ENCODE measurements at regions of chr22 and their contacts with region 1.

Region 1: GRCh38 chr22:47213571-47214230 is 451.3 kb downstream of the TBC1D22A start:
- DNase-seq: peak; percentile 77
- CTCF ChIP-seq: peak; percentile 78

Region 2: GRCh38 chr22:47030881-47031627 is 182.6 kb before region 1 on chr22:
- in situ Hi-C with region 1: no loop called
- DNase-seq: no peak
- CTCF ChIP-seq: no peak

Region 3: DNA sequence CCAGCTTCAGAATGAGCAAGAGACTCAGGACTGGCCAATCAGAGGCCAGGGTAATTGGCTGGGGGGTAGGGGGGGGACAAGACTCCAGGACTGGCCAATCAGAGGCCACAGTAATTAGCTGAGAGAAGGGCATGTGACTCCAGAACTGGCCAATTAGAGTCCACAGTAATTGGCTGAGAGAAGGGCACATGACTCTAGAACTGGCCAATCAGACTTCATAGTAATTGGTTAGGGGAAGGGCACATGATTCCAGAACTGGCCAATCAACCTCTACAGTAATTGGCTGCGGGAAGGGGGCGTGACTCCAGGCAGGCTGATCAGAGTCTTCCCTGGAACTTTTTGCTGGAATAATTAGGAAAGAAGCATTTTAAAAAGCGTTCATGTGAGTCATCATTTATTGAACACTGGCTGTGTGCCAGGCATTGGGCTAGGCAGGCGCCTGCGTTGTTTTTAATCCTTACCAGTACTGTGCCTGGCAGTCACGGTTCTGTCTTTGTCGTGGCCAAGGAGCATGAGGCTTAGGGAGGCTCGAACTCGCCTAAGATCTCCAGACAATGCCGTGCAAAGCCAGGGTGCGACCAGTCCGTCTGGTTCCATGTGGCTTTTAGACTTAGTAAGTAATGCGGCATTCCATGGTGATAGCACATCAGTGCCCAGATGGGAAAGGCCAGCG is 56.9 kb after region 1 on chr22:
- in situ Hi-C with region 1: no loop called
- DNase-seq: no peak
- CTCF ChIP-seq: no peak

Region 4: DNA sequence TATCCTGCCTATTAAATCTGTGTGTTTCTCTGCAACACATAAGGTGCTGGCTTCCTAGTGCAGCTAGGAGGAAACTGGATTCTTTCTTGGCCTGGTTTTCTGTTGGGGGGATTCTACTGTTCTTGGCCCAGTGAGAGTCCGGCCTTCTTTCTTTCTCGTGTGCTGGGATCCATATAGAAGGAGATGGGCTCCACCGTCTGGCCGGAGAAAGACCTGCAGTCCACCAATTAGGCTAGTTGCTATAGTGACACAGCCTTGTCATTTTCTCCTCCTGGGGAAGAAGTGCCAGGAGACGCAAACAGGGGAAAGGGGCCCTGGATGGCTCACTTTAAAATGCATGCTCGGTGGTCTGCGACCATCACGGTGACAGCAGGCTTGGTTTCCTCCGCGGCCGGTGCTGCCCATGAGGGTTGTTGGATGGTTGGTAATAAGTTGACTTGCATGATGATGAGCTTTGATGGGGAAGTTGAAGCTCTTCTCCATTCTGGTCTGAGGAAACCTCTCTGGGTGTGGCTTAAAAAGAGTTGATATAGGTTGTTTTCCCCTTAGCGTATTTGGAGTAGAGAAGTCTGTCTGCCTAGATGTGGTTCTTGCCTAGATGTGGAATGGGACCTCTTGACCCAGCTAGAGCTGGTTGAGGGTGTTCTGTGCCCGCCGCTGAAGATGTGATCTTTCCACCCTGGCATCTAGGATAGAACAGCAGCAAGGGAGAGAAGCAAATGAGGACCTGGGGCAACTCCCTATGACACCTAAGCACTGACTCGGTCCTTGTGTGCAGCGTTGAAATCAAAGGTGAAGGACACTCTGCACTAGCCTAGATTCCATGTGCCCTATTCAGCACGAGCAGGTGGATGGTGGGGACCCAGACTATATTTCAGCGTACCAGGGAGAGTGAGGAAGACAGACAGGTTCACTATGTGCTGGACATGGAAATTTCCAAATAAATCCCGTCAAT is 1278.9 kb after region 1 on chr22:
- in situ Hi-C with region 1: loop called (anchors 25 kb)
- DNase-seq: peak; percentile 81
- CTCF ChIP-seq: peak; percentile 75